ENCODE measurements at regions of chrX and their contacts with region 1.

Region 1: DNA sequence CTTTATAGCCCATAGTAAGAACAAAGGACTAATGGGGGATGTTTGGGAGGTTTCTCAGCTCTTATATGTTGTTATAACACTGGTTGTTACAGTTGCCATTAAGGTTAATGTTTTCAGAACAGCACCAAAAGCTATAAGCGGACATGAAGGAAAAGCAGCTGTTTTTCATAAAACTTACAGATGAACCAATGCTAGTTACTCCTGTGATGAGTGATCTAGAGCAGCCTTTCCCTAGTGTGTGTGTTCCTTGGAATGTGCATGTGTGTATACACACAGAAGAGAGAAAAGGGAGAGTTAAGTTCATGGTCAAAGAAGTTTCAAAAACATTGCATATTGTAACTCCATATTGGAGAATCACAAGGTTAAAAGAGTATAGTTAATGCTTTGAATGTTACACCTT is 150.8 kb downstream of the NHS start:
- DNase-seq: peak; percentile 21
- H3K4me3 ChIP-seq: no peak overlapping the region
- H3K27ac ChIP-seq: peak overlapping the region; percentile 52
- H3K27me3 ChIP-seq: no peaks in the 10 kb centered on the region
- CTCF ChIP-seq: no peak

Region 2: DNA sequence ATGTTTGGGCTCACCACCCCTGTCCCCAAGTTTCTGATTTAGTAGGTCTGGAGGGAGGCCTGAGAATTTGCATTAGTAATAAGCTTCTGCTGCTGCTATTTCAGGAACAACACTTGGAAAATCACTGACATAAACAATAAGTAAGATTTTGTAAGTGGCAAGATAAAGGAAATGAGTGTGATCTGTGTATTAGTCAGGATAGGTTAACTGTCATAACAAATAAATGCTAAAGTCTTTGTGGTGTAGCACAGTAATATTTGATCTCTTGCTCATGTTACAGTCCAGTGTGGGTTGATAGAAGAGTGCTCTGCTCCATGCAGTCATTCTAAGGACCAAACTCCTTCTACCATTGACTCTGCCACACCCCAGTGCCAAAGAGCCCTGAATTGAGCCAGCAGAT is 83.8 kb before region 1 on chrX:
- CTCF ChIA-PET with region 1: no interaction called
- POLR2A ChIA-PET with region 1: no interaction called
- DNase-seq: no peak
- H3K4me3 ChIP-seq: no peak overlapping the region
- H3K27ac ChIP-seq: no peak overlapping the region
- H3K27me3 ChIP-seq: no peaks in the 10 kb centered on the region
- CTCF ChIP-seq: no peak

Region 3: GRCh38 chrX:17567187-17567586 is 41.4 kb after region 1 on chrX:
- CTCF ChIA-PET with region 1: no interaction called
- POLR2A ChIA-PET with region 1: interaction called, 12 read pairs
- DNase-seq: no peak
- H3K4me3 ChIP-seq: no peak overlapping the region
- H3K27ac ChIP-seq: no peak overlapping the region
- H3K27me3 ChIP-seq: no peaks in the 10 kb centered on the region
- CTCF ChIP-seq: no peak

Measured in AG04450 (cell line).